Activated CD4-positive, alpha-beta T cell treated with anti-CD3 and anti-CD28 coated beads for 36 hours (primary cell): ENCODE measurements at regions of chr20 and their contacts with region 1.

Region 1: DNA sequence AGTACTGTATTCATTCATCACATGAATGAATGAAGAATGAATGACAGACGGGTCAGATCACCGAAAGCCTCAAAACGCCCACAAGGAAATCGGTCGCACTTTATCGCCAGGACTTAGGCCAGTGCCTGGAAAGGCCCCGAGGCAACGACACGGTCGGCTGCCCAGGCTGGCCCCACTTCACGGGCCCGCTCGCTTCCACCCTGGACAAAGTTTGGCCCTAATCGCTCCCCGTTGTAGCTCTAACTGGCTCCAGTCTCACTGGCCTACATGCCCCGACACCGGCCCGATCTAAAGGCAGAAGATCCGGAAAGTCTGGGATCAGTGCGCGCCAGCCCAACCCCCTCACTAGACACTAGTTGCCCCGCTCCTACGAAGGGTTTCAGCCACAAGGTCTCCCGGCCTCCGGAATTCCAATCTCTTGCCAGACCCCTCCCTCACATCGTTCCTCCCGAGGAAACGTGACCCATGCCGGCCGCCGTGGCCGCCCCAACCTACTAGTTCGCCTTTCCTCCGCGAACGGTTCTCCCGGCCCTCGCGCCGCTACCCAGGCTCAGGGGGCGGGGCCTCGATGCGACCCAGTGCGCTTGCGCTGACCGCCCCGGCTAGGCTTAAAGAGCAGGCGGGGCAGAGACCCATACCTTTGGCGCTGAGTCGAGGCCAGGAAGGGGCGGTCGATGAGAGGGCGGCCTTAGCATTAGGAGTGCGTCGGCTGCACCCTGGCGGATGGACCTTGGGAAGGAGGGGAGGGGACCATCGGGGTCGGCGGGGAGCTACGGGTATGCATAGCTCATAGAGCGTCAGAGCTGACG is at the starts of genes GSS and MYH7B:
- DNase-seq: peak; percentile 99
- ATAC-seq: peak; percentile 95
- H3K4me3 Mint-ChIP-seq: peak within 1 kb of the TSS; percentile 98
- H3K27ac Mint-ChIP-seq: peak within 1 kb of the TSS; percentile 94
- H3K4me1 Mint-ChIP-seq: peaks cover 16% of the 10 kb centered on the region
- H3K27me3 Mint-ChIP-seq: no peaks in the 10 kb centered on the region
- total RNA-seq, gene GSS: 58.7 to 59.5 TPM
- total RNA-seq, gene MYH7B: 0.23 to 0.40 TPM

Region 2: DNA sequence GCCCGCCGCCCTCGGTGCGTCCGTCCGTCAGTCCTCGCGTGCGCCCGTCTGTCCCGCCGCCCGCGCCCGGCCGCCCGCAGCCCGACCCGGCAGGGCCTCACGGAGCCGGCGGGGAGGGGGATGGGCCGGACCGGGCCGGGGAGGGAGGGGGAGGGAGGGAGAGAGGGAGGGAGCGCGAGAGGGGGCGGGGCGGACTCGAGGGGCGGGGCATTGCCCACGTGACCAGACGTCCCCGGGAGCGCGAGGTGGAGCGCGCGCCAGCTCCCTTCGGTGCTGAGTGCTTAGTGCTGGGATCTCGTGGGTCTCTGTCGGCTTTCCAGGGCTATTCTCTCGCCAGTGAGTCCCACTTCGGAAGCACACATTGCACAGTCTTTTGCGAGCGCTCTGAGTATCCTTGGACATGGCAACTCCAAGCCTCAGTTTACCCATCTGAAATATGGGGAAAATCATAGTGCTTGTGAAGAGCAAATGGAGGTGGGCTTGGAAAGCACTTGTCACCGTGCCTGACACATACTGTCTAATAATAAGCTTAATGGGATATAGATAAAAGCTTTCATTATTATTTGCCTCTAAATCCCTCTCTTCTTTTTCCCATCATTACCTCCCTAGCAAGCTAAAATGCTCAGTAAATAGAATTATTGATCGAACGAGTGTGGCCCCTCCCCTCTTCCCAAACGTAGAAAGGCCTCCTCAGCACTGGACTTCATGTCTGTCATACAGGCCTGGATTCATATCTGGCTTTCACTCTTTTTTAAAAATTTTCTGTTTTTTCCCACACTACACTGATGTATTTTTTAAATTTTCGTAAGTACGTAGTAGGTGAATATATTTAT is 129.7 kb before region 1 on chr20 and contains the start of gene NCOA6:
- CTCF ChIA-PET with region 1: no interaction called
- POLR2A ChIA-PET with region 1: no interaction called
- intact Hi-C with region 1: loop called in 1 of 2 experiments (anchors 1 kb)
- DNase-seq: peak; percentile 95
- ATAC-seq: peak; percentile 67
- H3K4me3 Mint-ChIP-seq: peak within 1 kb of the TSS; percentile 86
- H3K27ac Mint-ChIP-seq: peak within 1 kb of the TSS; percentile 95
- H3K4me1 Mint-ChIP-seq: peaks cover 30% of the 10 kb centered on the region
- H3K27me3 Mint-ChIP-seq: no peaks in the 10 kb centered on the region
- total RNA-seq, gene NCOA6: 20.3 to 31.1 TPM

Region 3: GRCh38 chr20:34891166-34892062 is 64.0 kb before region 1 on chr20:
- CTCF ChIA-PET with region 1: no interaction called
- POLR2A ChIA-PET with region 1: no interaction called
- intact Hi-C with region 1: loop called in 1 of 2 experiments (anchors 1 kb)
- DNase-seq: peak; percentile 64
- ATAC-seq: peak; percentile 97
- H3K4me3 Mint-ChIP-seq: peak overlapping the region; percentile 16
- H3K27ac Mint-ChIP-seq: peak overlapping the region; percentile 78
- H3K4me1 Mint-ChIP-seq: peaks cover 42% of the 10 kb centered on the region
- H3K27me3 Mint-ChIP-seq: no peaks in the 10 kb centered on the region

Region 4: DNA sequence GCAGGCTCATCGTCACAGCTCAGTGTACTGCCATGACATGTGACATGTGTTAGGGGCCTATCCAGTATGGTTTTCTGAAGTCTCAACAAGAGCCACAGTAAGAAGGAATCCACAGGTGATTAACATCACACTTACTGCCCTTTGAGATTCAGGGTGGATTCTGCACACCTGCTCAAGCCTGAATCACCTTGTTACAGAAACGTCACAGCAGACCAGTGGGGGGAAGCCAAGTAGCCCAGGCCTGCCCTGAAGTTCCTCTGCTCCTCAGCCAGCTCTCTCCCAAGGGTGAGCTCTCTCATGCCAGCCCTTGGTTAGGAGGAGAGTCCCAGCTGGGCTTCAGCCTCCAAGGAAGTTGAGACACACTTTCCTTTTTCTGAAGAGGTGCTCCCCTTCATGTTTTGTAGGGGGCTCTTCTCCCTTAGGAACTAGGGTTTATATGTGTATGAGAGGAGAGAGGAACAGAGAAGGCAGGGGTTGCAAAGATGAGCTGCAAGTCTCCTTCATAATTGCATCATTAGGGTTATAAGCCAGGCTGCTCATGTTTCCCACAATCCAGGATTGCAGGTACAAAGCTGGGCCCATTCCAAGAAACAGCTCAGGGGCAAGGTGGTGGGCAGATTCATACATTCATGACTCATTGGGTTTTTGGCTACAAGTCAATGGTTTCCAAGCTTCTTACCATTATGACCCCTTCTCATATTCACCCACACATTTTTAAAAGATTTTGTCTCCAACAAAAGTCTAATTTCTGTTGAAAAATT is 11.4 kb before region 1 on chr20:
- CTCF ChIA-PET with region 1: no interaction called
- POLR2A ChIA-PET with region 1: no interaction called
- intact Hi-C with region 1: no loop called
- DNase-seq: no peak
- ATAC-seq: no peak
- H3K4me3 Mint-ChIP-seq: no peak overlapping the region
- H3K27ac Mint-ChIP-seq: peak overlapping the region; percentile 37
- H3K4me1 Mint-ChIP-seq: peaks cover 3% of the 10 kb centered on the region
- H3K27me3 Mint-ChIP-seq: no peaks in the 10 kb centered on the region

Region 5: GRCh38 chr20:35277531-35278395 is 322.3 kb after region 1 on chr20 and contains the start of gene MMP24OS:
- CTCF ChIA-PET with region 1: no interaction called
- POLR2A ChIA-PET with region 1: no interaction called
- intact Hi-C with region 1: loop called in 1 of 2 experiments (anchors 1 kb)
- DNase-seq: peak; percentile 94
- ATAC-seq: peak; percentile 96
- H3K4me3 Mint-ChIP-seq: peak within 1 kb of the TSS; percentile 99
- H3K27ac Mint-ChIP-seq: peak within 1 kb of the TSS; percentile 97
- H3K4me1 Mint-ChIP-seq: peaks cover 9% of the 10 kb centered on the region
- H3K27me3 Mint-ChIP-seq: no peaks in the 10 kb centered on the region
- total RNA-seq, gene MMP24OS: 44.6 to 56.8 TPM